B cell (primary cell): ENCODE measurements at regions of chr2 and their contacts with region 1.

Region 1: GRCh38 chr2:30336978-30337841 is 105.9 kb downstream of the LBH start:
- DNase-seq: peak; percentile 80
- ATAC-seq: peak; percentile 89
- H3K4me3 ChIP-seq: peak overlapping the region; percentile 29 to 62 (median 42)
- H3K4me3 Mint-ChIP-seq: peak overlapping the region; percentile 81
- H3K27ac ChIP-seq: peak overlapping the region; percentile 89 to 90
- H3K27ac Mint-ChIP-seq: peak overlapping the region; percentile 99
- H3K4me1 ChIP-seq: peaks cover 93 to 94% of the 10 kb centered on the region in 2 donors
- H3K4me1 Mint-ChIP-seq: peaks cover 92% of the 10 kb centered on the region
- H3K27me3 ChIP-seq: no peaks in the 10 kb centered on the region
- H3K27me3 Mint-ChIP-seq: no peaks in the 10 kb centered on the region
- CTCF ChIP-seq: no peak

Region 2: DNA sequence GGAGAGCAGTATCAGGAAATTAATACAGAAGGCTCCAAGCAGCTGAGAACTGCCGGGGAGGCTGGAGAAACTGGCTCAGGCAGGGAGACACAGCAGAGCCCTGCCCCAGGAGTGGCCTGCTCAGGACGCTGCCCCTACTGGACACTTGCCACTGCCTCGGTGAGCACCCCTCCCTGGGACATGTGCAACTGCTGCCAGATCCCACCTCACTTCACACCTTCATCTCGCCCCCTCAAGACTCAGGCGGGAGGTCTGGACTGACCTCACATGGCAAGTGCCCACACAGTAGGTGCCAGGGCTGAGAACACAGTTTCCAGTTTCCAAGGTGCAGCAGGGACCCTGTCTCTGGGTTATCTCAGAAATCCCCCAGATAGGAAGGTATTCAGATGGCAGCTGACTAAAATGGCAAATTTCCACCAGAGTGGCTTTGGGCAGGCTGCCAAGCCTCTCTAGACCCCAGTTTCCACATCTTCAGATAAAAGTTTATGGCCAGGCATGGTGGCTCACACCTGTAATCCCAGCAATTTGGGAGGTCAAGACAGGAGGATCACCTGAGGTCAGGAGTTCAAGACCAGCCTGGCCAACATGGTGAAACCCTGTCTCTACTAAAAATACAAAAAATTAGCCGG is 139.5 kb before region 1 on chr2:
- CTCF ChIA-PET with region 1: no interaction called
- POLR2A ChIA-PET with region 1: no interaction called
- intact Hi-C with region 1: no loop called
- DNase-seq: no peak
- ATAC-seq: no peak
- H3K4me3 ChIP-seq: no peak overlapping the region
- H3K4me3 Mint-ChIP-seq: no peak overlapping the region
- H3K27ac ChIP-seq: no peak overlapping the region
- H3K27ac Mint-ChIP-seq: no peak overlapping the region
- H3K4me1 ChIP-seq: no peaks in the 10 kb centered on the region
- H3K4me1 Mint-ChIP-seq: no peaks in the 10 kb centered on the region
- H3K27me3 ChIP-seq: no peaks in the 10 kb centered on the region
- H3K27me3 Mint-ChIP-seq: no peaks in the 10 kb centered on the region
- CTCF ChIP-seq: no peak

Region 3: DNA sequence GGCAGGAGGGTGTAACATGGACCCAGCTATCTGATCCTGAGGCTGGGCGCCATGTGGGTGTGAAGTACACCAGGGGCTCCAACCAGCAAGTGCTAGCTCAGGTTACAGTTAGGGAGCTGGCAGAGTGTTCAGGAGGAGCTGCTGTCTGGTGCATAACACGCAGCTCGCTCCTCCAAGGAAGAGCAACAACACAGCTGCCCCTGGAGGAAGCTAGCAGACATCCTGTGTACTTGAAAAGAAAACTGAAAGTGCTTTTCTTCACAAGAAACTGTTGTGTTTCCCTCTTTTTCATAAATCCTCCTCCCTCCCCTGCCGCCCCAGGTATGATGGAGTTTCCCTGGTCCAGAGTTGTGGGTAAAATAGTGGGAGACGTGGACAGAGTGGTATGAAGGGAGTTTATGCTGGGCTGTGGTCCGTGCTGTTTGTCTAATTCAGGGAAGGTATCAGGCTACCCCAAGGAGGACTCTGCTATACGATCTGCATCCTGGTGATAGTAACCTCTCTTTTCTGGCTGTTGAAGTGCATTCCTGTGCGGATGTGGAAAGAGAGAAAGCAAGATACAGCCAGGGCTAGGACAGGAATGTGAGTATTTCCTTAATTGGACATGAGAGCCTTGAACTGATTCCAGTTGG is 112.0 kb before region 1 on chr2:
- CTCF ChIA-PET with region 1: interaction called, 18 read pairs
- POLR2A ChIA-PET with region 1: interaction called, 22 read pairs
- intact Hi-C with region 1: loop called (anchors 2 kb)
- DNase-seq: peak; percentile 74
- ATAC-seq: peak; percentile 68
- H3K4me3 ChIP-seq: peak overlapping the region; percentile 42 to 66 (median 64)
- H3K4me3 Mint-ChIP-seq: peak overlapping the region; percentile 95
- H3K27ac ChIP-seq: peak overlapping the region; percentile 88 to 91
- H3K27ac Mint-ChIP-seq: peak overlapping the region; percentile 100
- H3K4me1 ChIP-seq: peaks cover 41 to 53% of the 10 kb centered on the region in 2 donors
- H3K4me1 Mint-ChIP-seq: peaks cover 50% of the 10 kb centered on the region
- H3K27me3 ChIP-seq: no peaks in the 10 kb centered on the region
- H3K27me3 Mint-ChIP-seq: no peaks in the 10 kb centered on the region
- CTCF ChIP-seq: no peak

Region 4: GRCh38 chr2:30273261-30273861 is 63.8 kb before region 1 on chr2:
- CTCF ChIA-PET with region 1: interaction called, 15 read pairs
- POLR2A ChIA-PET with region 1: no interaction called
- intact Hi-C with region 1: no loop called
- DNase-seq: no peak
- ATAC-seq: no peak
- H3K4me3 ChIP-seq: no peak overlapping the region
- H3K4me3 Mint-ChIP-seq: peak overlapping the region; percentile 8
- H3K27ac ChIP-seq: no peak overlapping the region
- H3K27ac Mint-ChIP-seq: peak overlapping the region; percentile 90
- H3K4me1 ChIP-seq: peaks cover 73 to 90% of the 10 kb centered on the region in 2 donors
- H3K4me1 Mint-ChIP-seq: peaks cover 86% of the 10 kb centered on the region
- H3K27me3 ChIP-seq: no peaks in the 10 kb centered on the region
- H3K27me3 Mint-ChIP-seq: no peaks in the 10 kb centered on the region
- CTCF ChIP-seq: no peak

Region 5: GRCh38 chr2:30325600-30326328 is 11.4 kb before region 1 on chr2:
- CTCF ChIA-PET with region 1: interaction called, 37 read pairs
- POLR2A ChIA-PET with region 1: no interaction called
- intact Hi-C with region 1: loop called (anchors 1 kb)
- DNase-seq: peak; percentile 49
- ATAC-seq: peak; percentile 82
- H3K4me3 ChIP-seq: peak overlapping the region in 1 of 5 experiments; percentile 23
- H3K4me3 Mint-ChIP-seq: peak overlapping the region; percentile 56
- H3K27ac ChIP-seq: peak overlapping the region; percentile 65 to 79
- H3K27ac Mint-ChIP-seq: peak overlapping the region; percentile 98
- H3K4me1 ChIP-seq: peaks cover 38 to 48% of the 10 kb centered on the region in 2 donors
- H3K4me1 Mint-ChIP-seq: peaks cover 53% of the 10 kb centered on the region
- H3K27me3 ChIP-seq: no peaks in the 10 kb centered on the region
- H3K27me3 Mint-ChIP-seq: no peaks in the 10 kb centered on the region
- CTCF ChIP-seq: no peak

Region 6: GRCh38 chr2:30447149-30448045 is 110.2 kb after region 1 on chr2 and contains the start of gene LCLAT1:
- CTCF ChIA-PET with region 1: interaction called, 3 read pairs
- POLR2A ChIA-PET with region 1: interaction called, 5 read pairs
- intact Hi-C with region 1: loop called (anchors 2 kb)
- DNase-seq: peak; percentile 92
- ATAC-seq: peak; percentile 93
- H3K4me3 ChIP-seq: peak within 1 kb of the TSS; percentile 88 to 98 (median 97)
- H3K4me3 Mint-ChIP-seq: peak within 1 kb of the TSS; percentile 97
- H3K27ac ChIP-seq: peak within 1 kb of the TSS; percentile 82 to 84
- H3K27ac Mint-ChIP-seq: peak within 1 kb of the TSS; percentile 95
- H3K4me1 ChIP-seq: peaks cover 16 to 17% of the 10 kb centered on the region in 2 donors
- H3K4me1 Mint-ChIP-seq: peaks cover 25% of the 10 kb centered on the region
- H3K27me3 ChIP-seq: no peaks in the 10 kb centered on the region
- H3K27me3 Mint-ChIP-seq: no peaks in the 10 kb centered on the region
- CTCF ChIP-seq: peak; percentile 20
- total RNA-seq, gene LCLAT1: 21.7 and 21.9 TPM in 2 replicates

Region 7: GRCh38 chr2:30686000-30686399 is 348.8 kb after region 1 on chr2:
- CTCF ChIA-PET with region 1: no interaction called
- POLR2A ChIA-PET with region 1: no interaction called
- intact Hi-C with region 1: no loop called
- DNase-seq: no peak
- ATAC-seq: no peak
- H3K4me3 ChIP-seq: no peak overlapping the region
- H3K4me3 Mint-ChIP-seq: no peak overlapping the region
- H3K27ac ChIP-seq: no peak overlapping the region
- H3K27ac Mint-ChIP-seq: no peak overlapping the region
- H3K4me1 ChIP-seq: peaks cover 6 to 13% of the 10 kb centered on the region in 2 donors
- H3K4me1 Mint-ChIP-seq: peaks cover 12% of the 10 kb centered on the region
- H3K27me3 ChIP-seq: no peaks in the 10 kb centered on the region
- H3K27me3 Mint-ChIP-seq: no peaks in the 10 kb centered on the region
- CTCF ChIP-seq: no peak